Breast epithelium (tissue), 4 donors: ENCODE measurements at regions of chr11 and their contacts with region 1.

Region 1: GRCh38 chr11:131999084-131999483 is 628.7 kb downstream of the NTM start:
- DNase-seq: no peak
- H3K4me3 ChIP-seq: no peak overlapping the region
- H3K27ac ChIP-seq: no peak overlapping the region
- H3K4me1 ChIP-seq: no peaks in the 10 kb centered on the region
- H3K27me3 ChIP-seq: no peaks in the 10 kb centered on the region
- CTCF ChIP-seq: no peak
- POLR2A ChIP-seq: no peak

Region 2: DNA sequence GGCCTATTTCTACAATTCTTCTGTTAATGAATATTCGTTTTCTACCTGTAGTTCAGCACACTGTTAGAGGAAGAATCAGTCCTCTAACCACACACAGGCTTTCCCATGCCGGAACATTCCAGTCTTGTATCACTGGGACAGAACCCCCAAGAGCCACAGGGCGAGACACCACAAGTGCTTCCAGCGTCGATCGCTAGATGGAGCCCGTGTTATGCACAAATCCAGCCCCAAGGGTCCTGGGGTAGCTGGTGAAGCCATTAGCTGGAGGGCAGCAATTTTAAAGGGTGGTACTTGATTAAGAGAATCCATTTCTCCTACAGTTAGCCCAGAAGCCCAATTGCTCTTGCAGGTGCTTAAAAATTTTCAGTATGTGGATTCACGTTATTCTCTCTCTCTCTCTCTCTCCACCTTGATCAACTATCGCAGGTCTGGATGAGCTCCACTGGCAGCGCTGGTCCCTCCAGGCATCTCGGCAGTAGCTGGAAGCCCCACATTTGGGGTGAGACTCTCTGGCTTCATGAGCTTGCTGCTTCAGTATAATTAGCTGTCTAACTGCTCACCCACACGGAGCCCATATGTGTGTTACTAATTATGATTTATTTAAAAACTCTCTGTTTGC is 934.6 kb before region 1 on chr11:
- intact Hi-C with region 1: no loop called
- DNase-seq: peak in 1 of 2 donors; percentile 59
- H3K4me3 ChIP-seq: no peak overlapping the region
- H3K27ac ChIP-seq: no peak overlapping the region
- H3K4me1 ChIP-seq: no peaks in the 10 kb centered on the region
- H3K27me3 ChIP-seq: no peaks in the 10 kb centered on the region
- CTCF ChIP-seq: peak; percentile 7 to 78 (median 67)
- POLR2A ChIP-seq: no peak

Region 3: GRCh38 chr11:131955904-131956303 is 43.2 kb before region 1 on chr11:
- intact Hi-C with region 1: loop called (anchors 1 kb)
- DNase-seq: no peak
- H3K4me3 ChIP-seq: no peak overlapping the region
- H3K27ac ChIP-seq: no peak overlapping the region
- H3K4me1 ChIP-seq: no peaks in the 10 kb centered on the region
- H3K27me3 ChIP-seq: no peaks in the 10 kb centered on the region
- CTCF ChIP-seq: no peak
- POLR2A ChIP-seq: no peak